HepG2 (cell line): ENCODE measurements at regions of chr1 and their contacts with region 1.

Region 1: GRCh38 chr1:167220537-167221125 is at the start of gene POU2F1:
- DNase-seq: peak; percentile 95
- ATAC-seq: peak; percentile 65
- H3K4me3 ChIP-seq: peak within 1 kb of the TSS; percentile 85 to 87 (median 87)
- H3K27ac ChIP-seq: peak within 1 kb of the TSS; percentile 96
- H3K4me1 ChIP-seq: peaks cover 39% of the 10 kb centered on the region
- H3K27me3 ChIP-seq: no peaks in the 10 kb centered on the region
- CTCF ChIP-seq: peak; percentile 79
- EP300 ChIP-seq: 0 out of 4 replicates have a peak, but pooled peaks of 1 of the 2 experiments have one; percentile 16
- POLR2A ChIP-seq: peak; percentile 43 to 84; a peak in 3 of 4 replicates
- RAD21 ChIP-seq: no peak
- total RNA-seq, gene POU2F1: 10.2 and 15.1 TPM in 2 replicates

Region 2: DNA sequence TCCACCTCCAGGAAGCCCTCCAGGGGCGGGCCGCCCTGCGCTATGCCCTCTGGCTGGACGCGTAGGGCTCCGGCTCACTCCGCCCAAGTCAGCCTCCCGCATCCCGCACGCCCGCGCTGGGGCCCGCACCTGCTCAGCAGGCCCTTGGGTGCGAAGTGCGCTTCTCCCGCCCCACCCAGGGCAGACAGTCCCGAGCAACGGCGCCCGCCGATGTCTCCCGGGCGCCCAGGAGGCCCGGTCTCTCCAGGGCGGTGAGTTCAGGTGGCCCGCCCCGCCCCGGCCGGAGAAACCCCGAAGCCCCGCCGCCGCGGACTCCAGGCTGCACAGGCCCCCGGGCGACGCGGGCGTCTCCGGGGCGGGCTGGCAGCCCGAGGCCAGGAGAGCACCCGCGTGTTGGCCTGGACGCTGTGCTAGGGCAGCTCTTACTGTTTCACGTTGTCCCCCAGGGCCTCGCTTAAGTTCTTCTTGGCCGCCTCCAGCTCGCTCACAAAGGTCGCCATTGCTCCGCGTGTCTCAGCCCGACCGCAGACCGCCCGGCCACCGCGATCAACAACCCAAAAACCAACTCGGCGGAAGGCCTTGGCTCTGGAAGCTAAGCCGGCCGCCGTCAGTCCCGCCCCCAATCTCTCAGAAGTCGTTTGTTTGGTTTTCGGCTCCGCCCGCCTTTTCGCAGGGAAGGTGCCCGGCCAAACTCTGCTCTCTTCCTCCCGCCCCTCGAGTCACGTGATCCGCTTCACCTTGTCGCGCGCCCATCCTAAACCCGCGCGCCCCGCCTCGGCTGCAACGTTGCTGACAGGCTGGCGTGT is 344.7 kb before region 1 on chr1 and contains the start of gene TADA1:
- CTCF ChIA-PET with region 1: no interaction called
- POLR2A ChIA-PET with region 1: interaction called, 5 read pairs
- in situ Hi-C with region 1: no loop called
- intact Hi-C with region 1: loop called (anchors 1 kb)
- DNase-seq: peak; percentile 96
- ATAC-seq: peak; percentile 91
- H3K4me3 ChIP-seq: peak within 1 kb of the TSS; percentile 86 to 93 (median 92)
- H3K27ac ChIP-seq: peak within 1 kb of the TSS; percentile 99
- H3K4me1 ChIP-seq: peaks cover 58% of the 10 kb centered on the region
- H3K27me3 ChIP-seq: no peaks in the 10 kb centered on the region; a peak in 1 of 5 replicates
- CTCF ChIP-seq: peak; percentile 69
- EP300 ChIP-seq: no peak
- POLR2A ChIP-seq: peak; percentile 68 to 72
- RAD21 ChIP-seq: peak; percentile 35
- total RNA-seq, gene TADA1: 28.3 and 38.1 TPM in 2 replicates

Region 3: GRCh38 chr1:167105271-167106118 is 115.1 kb before region 1 on chr1:
- CTCF ChIA-PET with region 1: no interaction called
- POLR2A ChIA-PET with region 1: no interaction called
- in situ Hi-C with region 1: no loop called
- intact Hi-C with region 1: no loop called
- DNase-seq: no peak
- ATAC-seq: no peak
- H3K4me3 ChIP-seq: no peak overlapping the region
- H3K27ac ChIP-seq: no peak overlapping the region
- H3K4me1 ChIP-seq: peaks cover 9% of the 10 kb centered on the region; the same call in 1 of the 2 replicates
- H3K27me3 ChIP-seq: peaks cover 0 to 36% of the 10 kb centered on the region in 2 experiments; a peak in 3 of 5 replicates
- CTCF ChIP-seq: no peak
- EP300 ChIP-seq: no peak
- POLR2A ChIP-seq: no peak
- RAD21 ChIP-seq: no peak

Region 4: GRCh38 chr1:167297222-167298214 is 76.9 kb after region 1 on chr1:
- CTCF ChIA-PET with region 1: no interaction called
- POLR2A ChIA-PET with region 1: interaction called, 11 read pairs
- in situ Hi-C with region 1: no loop called
- intact Hi-C with region 1: loop called (anchors 2 kb)
- DNase-seq: peak; percentile 91
- ATAC-seq: peak; percentile 95
- H3K4me3 ChIP-seq: peak overlapping the region; percentile 15 to 42 (median 33); a peak in 3 of 6 replicates
- H3K27ac ChIP-seq: peak overlapping the region; percentile 97
- H3K4me1 ChIP-seq: peaks cover 53% of the 10 kb centered on the region
- H3K27me3 ChIP-seq: no peaks in the 10 kb centered on the region
- CTCF ChIP-seq: no peak
- EP300 ChIP-seq: peak; percentile 74 to 89; a peak in 3 of 4 replicates
- POLR2A ChIP-seq: 0 out of 4 replicates have a peak, but pooled peaks of 1 of the 2 experiments have one; percentile 20
- RAD21 ChIP-seq: no peak

Region 5: GRCh38 chr1:167342846-167343245 is 122.2 kb after region 1 on chr1:
- CTCF ChIA-PET with region 1: no interaction called
- POLR2A ChIA-PET with region 1: no interaction called
- in situ Hi-C with region 1: no loop called
- intact Hi-C with region 1: loop called (anchors 5 kb)
- DNase-seq: peak; percentile 19
- ATAC-seq: peak; percentile 60
- H3K4me3 ChIP-seq: no peak overlapping the region
- H3K27ac ChIP-seq: no peak overlapping the region
- H3K4me1 ChIP-seq: peaks cover 16% of the 10 kb centered on the region
- H3K27me3 ChIP-seq: no peaks in the 10 kb centered on the region
- CTCF ChIP-seq: peak; percentile 47
- EP300 ChIP-seq: no peak
- POLR2A ChIP-seq: no peak
- RAD21 ChIP-seq: 0 out of 2 replicates have a peak, but pooled peaks have one; percentile 31

Region 6: GRCh38 chr1:167371030-167371429 is 150.4 kb after region 1 on chr1:
- CTCF ChIA-PET with region 1: no interaction called
- POLR2A ChIA-PET with region 1: no interaction called
- in situ Hi-C with region 1: no loop called
- intact Hi-C with region 1: no loop called
- DNase-seq: no peak
- ATAC-seq: no peak
- H3K4me3 ChIP-seq: no peak overlapping the region
- H3K27ac ChIP-seq: no peak overlapping the region
- H3K4me1 ChIP-seq: no peaks in the 10 kb centered on the region
- H3K27me3 ChIP-seq: no peaks in the 10 kb centered on the region
- CTCF ChIP-seq: no peak
- EP300 ChIP-seq: no peak
- POLR2A ChIP-seq: no peak
- RAD21 ChIP-seq: no peak

Region 7: GRCh38 chr1:167553136-167554027 is 332.8 kb after region 1 on chr1 and contains the start of gene CREG1:
- CTCF ChIA-PET with region 1: no interaction called
- POLR2A ChIA-PET with region 1: interaction called, 10 read pairs
- in situ Hi-C with region 1: no loop called
- intact Hi-C with region 1: no loop called
- DNase-seq: peak; percentile 88
- ATAC-seq: peak; percentile 100
- H3K4me3 ChIP-seq: peak within 1 kb of the TSS; percentile 57 to 72 (median 58)
- H3K27ac ChIP-seq: no peak within 1 kb of the TSS
- H3K4me1 ChIP-seq: peaks cover 7% of the 10 kb centered on the region
- H3K27me3 ChIP-seq: peaks cover 0 to 4% of the 10 kb centered on the region in 2 experiments; a peak in 1 of 5 replicates
- CTCF ChIP-seq: no peak
- EP300 ChIP-seq: no peak
- POLR2A ChIP-seq: peak; percentile 77 to 82
- RAD21 ChIP-seq: peak; percentile 57; the same call in 1 of the 2 replicates
- total RNA-seq, gene CREG1: 19.1 and 31.3 TPM in 2 replicates